Transverse colon (tissue), 4 donors: ENCODE measurements at regions of chr2 and their contacts with region 1.

Region 1: GRCh38 chr2:236180831-236181453 is 12.8 kb upstream of the GBX2 start:
- DNase-seq: peak; percentile 56
- H3K4me3 ChIP-seq: no peak overlapping the region
- H3K27ac ChIP-seq: no peak overlapping the region
- H3K4me1 ChIP-seq: peaks cover 7 to 21% (median 14%) of the 10 kb centered on the region in 4 donors
- H3K27me3 ChIP-seq: peaks cover 91% of the 10 kb centered on the region
- CTCF ChIP-seq: peak; percentile 62 to 77 (median 72)
- EP300 ChIP-seq: no peak
- POLR2A ChIP-seq: no peak

Region 2: GRCh38 chr2:235766278-235766677 is 414.7 kb before region 1 on chr2:
- in situ Hi-C with region 1: loop called in 3 of 4 experiments (anchors 10 kb)
- intact Hi-C with region 1: loop called (anchors 5 kb)
- DNase-seq: peak; percentile 73
- H3K4me3 ChIP-seq: no peak overlapping the region
- H3K27ac ChIP-seq: peak overlapping the region in 1 of 4 donors; percentile 4
- H3K4me1 ChIP-seq: peaks cover 0 to 8% (median 0%) of the 10 kb centered on the region in 4 donors
- H3K27me3 ChIP-seq: no peaks in the 10 kb centered on the region
- CTCF ChIP-seq: peak; percentile 87 to 95 (median 91)
- EP300 ChIP-seq: no peak
- POLR2A ChIP-seq: no peak

Region 3: DNA sequence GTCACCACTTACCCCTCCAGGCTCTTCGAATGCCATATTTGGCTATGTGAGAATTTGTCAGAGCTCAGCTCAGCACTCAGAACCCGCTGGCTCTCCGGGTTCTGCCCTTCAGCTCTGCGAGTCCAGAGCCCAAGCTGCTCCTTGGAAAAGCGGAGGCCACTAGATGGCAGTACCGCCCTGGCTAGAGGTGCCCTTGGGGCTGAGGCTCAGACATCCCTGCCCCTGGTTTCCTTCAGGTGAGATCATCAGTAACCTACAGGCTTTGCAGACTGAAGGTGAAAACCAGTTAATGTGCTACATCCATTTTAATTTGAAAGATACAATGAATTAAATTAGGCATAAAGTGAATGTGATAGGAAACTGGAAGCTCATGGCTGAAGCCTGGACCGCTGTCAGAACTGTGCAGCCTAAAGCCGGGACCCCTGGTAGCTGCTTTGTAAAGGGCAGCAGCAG is 401.5 kb before region 1 on chr2:
- in situ Hi-C with region 1: loop called (anchors 10 kb)
- intact Hi-C with region 1: no loop called
- DNase-seq: peak; percentile 72
- H3K4me3 ChIP-seq: no peak overlapping the region
- H3K27ac ChIP-seq: no peak overlapping the region
- H3K4me1 ChIP-seq: no peaks in the 10 kb centered on the region
- H3K27me3 ChIP-seq: no peaks in the 10 kb centered on the region
- CTCF ChIP-seq: peak; percentile 67 to 80 (median 70)
- EP300 ChIP-seq: no peak
- POLR2A ChIP-seq: no peak

Region 4: GRCh38 chr2:235789552-235789951 is 391.4 kb before region 1 on chr2:
- in situ Hi-C with region 1: loop called in 1 of 4 experiments (anchors 10 kb)
- intact Hi-C with region 1: no loop called
- DNase-seq: no peak
- H3K4me3 ChIP-seq: no peak overlapping the region
- H3K27ac ChIP-seq: no peak overlapping the region
- H3K4me1 ChIP-seq: no peaks in the 10 kb centered on the region
- H3K27me3 ChIP-seq: no peaks in the 10 kb centered on the region
- CTCF ChIP-seq: no peak
- EP300 ChIP-seq: no peak
- POLR2A ChIP-seq: no peak